Activated CD4-positive, alpha-beta memory T cell treated with anti-CD3 and anti-CD28 coated beads, Interleukin-2, amount 10 ng/mL, durations not matched to agents 7 days and 5 days (primary cell): ENCODE measurements at regions of chr5 and their contacts with region 1.

Region 1: GRCh38 chr5:159209438-159210305 is at the start of gene RNF145:
- DNase-seq: peak; percentile 88
- H3K4me3 Mint-ChIP-seq: peak within 1 kb of the TSS; percentile 88
- H3K27ac Mint-ChIP-seq: peak within 1 kb of the TSS; percentile 98
- H3K4me1 Mint-ChIP-seq: peaks cover 39% of the 10 kb centered on the region
- H3K27me3 Mint-ChIP-seq: no peaks in the 10 kb centered on the region
- total RNA-seq, gene RNF145: 126 to 127 TPM

Region 2: GRCh38 chr5:159156426-159157238 is 53.0 kb before region 1 on chr5:
- CTCF ChIA-PET with region 1: interaction called, 25 read pairs
- POLR2A ChIA-PET with region 1: interaction called, 12 read pairs
- DNase-seq: peak; percentile 30
- H3K4me3 Mint-ChIP-seq: no peak overlapping the region
- H3K27ac Mint-ChIP-seq: peak overlapping the region; percentile 9
- H3K4me1 Mint-ChIP-seq: peaks cover 24% of the 10 kb centered on the region
- H3K27me3 Mint-ChIP-seq: no peaks in the 10 kb centered on the region

Region 3: DNA sequence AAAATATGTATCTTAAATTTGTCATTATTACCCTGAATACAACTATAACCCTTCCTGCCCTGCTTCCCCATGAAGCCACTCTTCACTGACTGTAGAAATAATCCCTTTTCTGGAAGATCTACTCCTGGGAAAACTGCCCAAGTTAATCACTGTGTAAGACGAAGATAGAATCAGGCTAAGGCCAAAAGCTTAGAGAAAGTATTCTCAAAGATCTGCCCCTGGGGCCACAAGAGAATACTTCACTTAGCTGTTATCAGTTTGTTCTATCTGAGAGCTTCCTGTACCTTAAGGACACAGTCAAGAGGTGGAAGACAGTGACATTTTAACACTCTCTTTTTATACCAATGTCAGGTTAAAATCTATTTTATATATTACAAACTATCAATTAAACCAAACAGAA is 34.1 kb before region 1 on chr5:
- CTCF ChIA-PET with region 1: interaction called, 3 read pairs
- POLR2A ChIA-PET with region 1: interaction called, 22 read pairs
- DNase-seq: no peak
- H3K4me3 Mint-ChIP-seq: no peak overlapping the region
- H3K27ac Mint-ChIP-seq: peak overlapping the region; percentile 47
- H3K4me1 Mint-ChIP-seq: peaks cover 44% of the 10 kb centered on the region
- H3K27me3 Mint-ChIP-seq: no peaks in the 10 kb centered on the region

Region 4: DNA sequence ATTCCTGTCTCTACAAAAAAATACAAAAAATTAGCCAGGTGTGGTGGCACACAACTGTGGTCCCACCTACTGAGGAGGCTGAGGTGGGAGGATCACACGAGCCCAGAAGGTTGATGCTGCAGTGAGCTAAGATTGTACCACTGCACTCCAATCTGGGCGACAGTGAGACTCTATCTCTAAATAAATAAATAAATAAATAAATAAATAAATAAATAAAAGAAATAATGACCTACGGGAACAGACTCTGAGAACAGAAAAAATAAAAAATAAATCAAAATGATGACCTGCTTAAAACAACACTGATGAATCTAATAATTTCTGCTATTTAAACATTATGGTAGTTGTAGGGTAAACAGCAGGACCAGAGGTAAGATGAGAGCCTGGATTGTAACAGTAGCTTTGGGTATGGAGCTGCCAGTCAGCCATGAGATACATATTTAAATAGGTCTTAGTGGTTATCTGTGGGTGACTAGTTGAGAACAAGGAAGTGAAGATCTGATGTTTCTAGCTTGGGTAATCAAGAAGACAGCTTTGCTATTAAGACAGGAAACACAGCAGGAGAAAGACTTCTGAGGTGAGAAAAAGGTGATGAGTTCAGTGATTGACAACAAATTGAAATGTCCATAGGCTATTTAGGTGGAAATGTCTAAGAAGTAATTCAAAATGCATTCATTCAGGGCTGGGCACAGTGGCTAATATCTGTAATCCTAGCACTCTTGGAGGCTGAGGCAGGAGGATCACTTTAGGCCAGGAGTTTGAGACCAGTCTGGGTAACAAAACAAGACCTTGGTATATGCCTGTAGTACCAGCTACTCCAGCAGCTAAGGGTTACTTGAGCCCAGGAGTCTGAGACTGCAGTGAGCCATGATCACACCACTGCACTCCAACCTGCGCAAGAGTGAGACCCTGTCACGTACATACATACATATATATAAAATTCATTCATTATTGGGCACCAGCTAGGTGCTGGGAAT is 11.3 kb before region 1 on chr5:
- CTCF ChIA-PET with region 1: interaction called, 10 read pairs
- POLR2A ChIA-PET with region 1: interaction called, 58 read pairs
- DNase-seq: no peak
- H3K4me3 Mint-ChIP-seq: no peak overlapping the region
- H3K27ac Mint-ChIP-seq: peak overlapping the region; percentile 70
- H3K4me1 Mint-ChIP-seq: peaks cover 46% of the 10 kb centered on the region
- H3K27me3 Mint-ChIP-seq: no peaks in the 10 kb centered on the region

Region 5: DNA sequence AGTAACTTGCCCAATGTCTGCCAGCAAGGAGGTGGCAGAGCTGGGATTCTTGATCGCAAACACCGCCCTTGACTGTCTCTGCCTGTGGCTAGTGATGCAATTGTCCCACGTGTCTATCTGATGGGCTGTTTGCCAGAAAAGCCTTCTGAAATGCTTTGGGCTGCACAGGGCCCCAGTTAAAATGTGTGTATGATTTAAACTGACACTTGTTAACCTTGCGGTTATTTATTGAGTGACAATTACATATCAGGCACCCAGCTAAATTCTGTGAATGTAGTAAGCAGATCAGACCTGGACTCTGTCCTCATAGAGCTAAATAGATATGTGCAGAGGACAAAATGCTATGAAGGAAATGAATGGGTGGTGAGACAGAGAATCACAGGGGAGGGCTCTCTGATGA is 132.2 kb after region 1 on chr5:
- CTCF ChIA-PET with region 1: interaction called, 4 read pairs
- POLR2A ChIA-PET with region 1: interaction called, 20 read pairs
- DNase-seq: peak; percentile 78
- H3K4me3 Mint-ChIP-seq: no peak overlapping the region
- H3K27ac Mint-ChIP-seq: peak overlapping the region; percentile 87
- H3K4me1 Mint-ChIP-seq: peaks cover 85% of the 10 kb centered on the region
- H3K27me3 Mint-ChIP-seq: peaks cover 1% of the 10 kb centered on the region